ENCODE measurements at regions of chr17 and their contacts with region 1.

Region 1: DNA sequence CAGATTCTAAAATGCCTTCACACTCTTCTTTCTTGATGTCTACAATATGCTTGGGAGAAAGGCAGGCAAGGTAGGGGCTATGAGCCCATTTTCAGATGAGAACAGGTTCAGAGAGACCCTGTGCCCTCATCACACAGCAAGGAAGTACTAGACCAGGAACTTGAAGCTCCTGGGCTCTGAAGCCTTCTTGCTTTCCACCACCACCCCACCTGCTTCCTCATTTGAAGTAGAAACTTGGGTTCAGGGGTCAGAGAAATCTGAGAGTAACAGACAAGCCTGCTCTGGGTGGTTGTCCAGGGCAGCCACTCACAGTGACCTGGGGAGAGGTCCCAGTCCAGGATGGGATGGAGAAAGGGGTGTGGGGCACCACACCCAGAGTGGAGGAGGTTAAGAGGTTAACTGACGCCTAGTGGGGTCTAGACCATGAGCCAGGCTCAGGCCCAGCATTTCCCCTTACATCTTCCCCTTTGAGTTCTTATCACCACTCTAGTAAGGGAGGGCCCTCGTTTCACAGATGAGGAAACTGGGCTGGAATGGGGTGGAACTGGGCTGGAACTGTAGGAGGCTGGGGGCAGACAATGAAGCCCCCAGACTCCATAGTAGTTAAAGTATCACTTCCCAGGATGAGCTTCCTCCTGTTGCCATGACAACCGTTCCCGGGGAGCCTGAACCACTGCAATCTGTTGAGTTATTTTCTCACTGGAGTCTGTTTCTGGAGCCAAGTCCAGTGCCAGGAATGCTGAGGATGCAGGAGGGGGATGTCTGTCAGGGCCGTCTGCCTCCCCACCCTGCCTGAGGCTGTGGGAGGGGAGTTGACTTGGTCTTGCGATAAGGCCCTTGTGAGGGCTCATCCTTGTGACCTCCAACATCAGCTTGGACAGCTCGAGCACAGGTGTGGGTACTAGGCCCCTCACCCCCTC is 16.2 kb upstream of the PHF12 start:
- DNase-seq: no peak
- ATAC-seq: no peak
- H3K4me3 Mint-ChIP-seq: no peak overlapping the region
- H3K27ac Mint-ChIP-seq: no peak overlapping the region
- H3K4me1 Mint-ChIP-seq: no peaks in the 10 kb centered on the region
- H3K27me3 Mint-ChIP-seq: peaks cover 11% of the 10 kb centered on the region
- CTCF ChIP-seq: no peak

Region 2: GRCh38 chr17:28946239-28946638 is 21.2 kb before region 1 on chr17:
- CTCF ChIA-PET with region 1: interaction called, 87 read pairs
- POLR2A ChIA-PET with region 1: no interaction called
- intact Hi-C with region 1: no loop called
- DNase-seq: no peak
- ATAC-seq: no peak
- H3K4me3 Mint-ChIP-seq: peak overlapping the region; percentile 23
- H3K27ac Mint-ChIP-seq: peak overlapping the region; percentile 84
- H3K4me1 Mint-ChIP-seq: peaks cover 64% of the 10 kb centered on the region
- H3K27me3 Mint-ChIP-seq: no peaks in the 10 kb centered on the region
- CTCF ChIP-seq: no peak

Region 3: GRCh38 chr17:28982131-28982951 is 14.9 kb after region 1 on chr17:
- CTCF ChIA-PET with region 1: interaction called, 15 read pairs
- POLR2A ChIA-PET with region 1: interaction called, 5 read pairs
- intact Hi-C with region 1: no loop called
- DNase-seq: peak; percentile 79
- ATAC-seq: peak; percentile 91
- H3K4me3 Mint-ChIP-seq: no peak overlapping the region
- H3K27ac Mint-ChIP-seq: peak overlapping the region; percentile 94
- H3K4me1 Mint-ChIP-seq: peaks cover 22% of the 10 kb centered on the region
- H3K27me3 Mint-ChIP-seq: no peaks in the 10 kb centered on the region
- CTCF ChIP-seq: no peak

Region 4: GRCh38 chr17:29032857-29033197 is 65.3 kb after region 1 on chr17:
- CTCF ChIA-PET with region 1: interaction called, 11 read pairs
- POLR2A ChIA-PET with region 1: interaction called, 3 read pairs
- intact Hi-C with region 1: no loop called
- DNase-seq: no peak
- ATAC-seq: no peak
- H3K4me3 Mint-ChIP-seq: no peak overlapping the region
- H3K27ac Mint-ChIP-seq: no peak overlapping the region
- H3K4me1 Mint-ChIP-seq: no peaks in the 10 kb centered on the region
- H3K27me3 Mint-ChIP-seq: peaks cover 32% of the 10 kb centered on the region
- CTCF ChIP-seq: no peak

Region 5: DNA sequence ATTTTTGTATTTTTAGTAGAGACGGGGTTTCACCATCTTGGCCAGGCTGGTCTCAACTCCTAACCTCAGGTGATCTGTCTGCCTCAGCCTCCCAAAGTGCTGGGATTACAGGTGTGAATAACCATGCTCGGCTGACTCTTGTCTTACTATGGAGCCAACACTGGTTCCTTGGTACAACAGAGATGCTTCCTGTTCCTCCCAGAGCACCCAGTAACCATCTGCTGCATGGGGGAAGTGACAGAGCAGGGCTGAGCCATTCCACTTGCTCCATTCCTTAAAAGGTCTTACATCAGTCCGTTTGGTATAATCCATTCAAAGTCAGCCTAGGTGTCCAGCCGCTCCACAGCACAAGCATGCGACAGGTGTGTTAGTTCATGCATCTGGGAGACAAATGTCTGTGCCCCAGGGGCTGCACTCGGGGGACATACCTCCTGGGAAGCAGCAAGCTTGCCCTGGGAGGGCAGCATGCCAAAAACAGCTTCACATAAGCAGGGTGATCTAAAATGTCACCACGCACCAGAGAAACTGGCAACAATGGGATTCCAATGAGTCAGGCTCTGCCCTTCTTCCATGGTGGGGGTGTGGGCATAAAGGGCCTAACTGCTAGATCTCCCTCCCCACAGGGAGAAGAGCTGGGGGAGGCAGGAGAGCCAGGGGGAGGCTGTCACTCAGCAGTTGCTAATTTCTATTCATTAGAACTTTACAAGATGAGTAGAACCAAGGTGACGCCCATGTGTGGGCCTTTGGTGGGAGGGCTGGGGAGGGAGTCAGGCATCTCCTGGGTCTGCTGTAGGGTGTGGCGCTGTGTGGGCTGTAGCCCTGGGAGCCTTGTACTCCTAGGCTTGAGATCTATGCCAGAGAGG is 110.9 kb after region 1 on chr17:
- CTCF ChIA-PET with region 1: interaction called, 18 read pairs
- POLR2A ChIA-PET with region 1: no interaction called
- intact Hi-C with region 1: no loop called
- DNase-seq: no peak
- ATAC-seq: no peak
- H3K4me3 Mint-ChIP-seq: no peak overlapping the region
- H3K27ac Mint-ChIP-seq: no peak overlapping the region
- H3K4me1 Mint-ChIP-seq: no peaks in the 10 kb centered on the region
- H3K27me3 Mint-ChIP-seq: no peaks in the 10 kb centered on the region
- CTCF ChIP-seq: no peak

Region 6: DNA sequence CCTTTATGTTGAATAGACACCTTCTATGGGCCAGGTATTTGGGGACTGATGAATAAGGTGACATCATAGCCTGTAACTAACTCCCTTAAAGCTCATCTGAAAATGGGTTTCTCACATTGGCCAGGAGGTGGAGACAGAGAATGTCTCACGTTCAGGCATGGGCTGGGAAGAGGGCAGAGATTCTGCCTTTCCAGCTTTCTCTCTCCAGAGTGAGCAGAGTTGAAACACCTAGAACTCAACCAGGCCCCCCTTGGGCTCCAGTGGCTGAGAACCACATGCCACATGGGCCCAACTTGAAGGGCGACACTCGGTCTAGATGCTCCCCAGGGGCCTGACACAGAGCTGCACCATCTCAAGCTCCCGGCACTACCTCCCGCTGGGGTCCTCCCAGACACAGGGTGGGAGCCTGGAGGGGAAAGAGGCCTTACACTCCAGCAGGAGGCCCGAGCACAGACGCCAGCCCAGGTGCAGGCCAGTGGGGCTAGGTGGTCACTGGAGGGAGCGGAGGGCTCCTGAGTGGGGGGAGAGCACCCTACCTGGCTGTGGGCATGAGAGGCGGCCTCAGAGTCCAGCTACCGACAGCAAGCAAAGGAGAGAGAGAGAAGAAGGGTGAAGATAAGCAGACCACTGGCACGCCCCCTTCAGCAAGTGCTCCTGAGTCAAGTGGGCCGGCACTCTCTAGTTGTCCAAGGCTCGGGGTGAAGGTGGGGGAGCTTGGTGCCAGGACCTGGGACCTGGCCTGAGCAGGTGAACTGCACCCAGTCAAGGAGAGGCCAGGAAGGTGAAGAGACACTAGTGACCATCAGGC is 156.8 kb after region 1 on chr17:
- CTCF ChIA-PET with region 1: interaction called, 353 read pairs
- POLR2A ChIA-PET with region 1: no interaction called
- intact Hi-C with region 1: no loop called
- DNase-seq: peak; percentile 55
- ATAC-seq: peak; percentile 97
- H3K4me3 Mint-ChIP-seq: no peak overlapping the region
- H3K27ac Mint-ChIP-seq: no peak overlapping the region
- H3K4me1 Mint-ChIP-seq: no peaks in the 10 kb centered on the region
- H3K27me3 Mint-ChIP-seq: no peaks in the 10 kb centered on the region
- CTCF ChIP-seq: peak; percentile 76

Measured in activated CD8-positive, alpha-beta T cell treated with anti-CD3 and anti-CD28 coated beads for 36 hours (primary cell).